Testis (tissue), 5 donors: ENCODE measurements at regions of chr15 and their contacts with region 1.

Region 1: GRCh38 chr15:63322541-63322940 is 45.1 kb downstream of the APH1B start:
- DNase-seq: peak; percentile 45
- H3K4me3 ChIP-seq: no peak overlapping the region
- H3K27ac ChIP-seq: no peak overlapping the region
- H3K4me1 ChIP-seq: no peaks in the 10 kb centered on the region
- H3K27me3 ChIP-seq: no peaks in the 10 kb centered on the region
- CTCF ChIP-seq: no peak
- POLR2A ChIP-seq: no peak

Region 2: GRCh38 chr15:63381301-63382204 is 59.0 kb after region 1 on chr15 and contains the start of gene CA12:
- intact Hi-C with region 1: loop called (anchors 10 kb)
- DNase-seq: peak; percentile 33
- H3K4me3 ChIP-seq: peak within 1 kb of the TSS; percentile 34 to 43
- H3K27ac ChIP-seq: no peak within 1 kb of the TSS
- H3K4me1 ChIP-seq: peaks cover 8% of the 10 kb centered on the region
- H3K27me3 ChIP-seq: no peaks in the 10 kb centered on the region
- CTCF ChIP-seq: no peak
- POLR2A ChIP-seq: no peak
- total RNA-seq, gene CA12: 0.55 to 0.68 TPM

Region 3: DNA sequence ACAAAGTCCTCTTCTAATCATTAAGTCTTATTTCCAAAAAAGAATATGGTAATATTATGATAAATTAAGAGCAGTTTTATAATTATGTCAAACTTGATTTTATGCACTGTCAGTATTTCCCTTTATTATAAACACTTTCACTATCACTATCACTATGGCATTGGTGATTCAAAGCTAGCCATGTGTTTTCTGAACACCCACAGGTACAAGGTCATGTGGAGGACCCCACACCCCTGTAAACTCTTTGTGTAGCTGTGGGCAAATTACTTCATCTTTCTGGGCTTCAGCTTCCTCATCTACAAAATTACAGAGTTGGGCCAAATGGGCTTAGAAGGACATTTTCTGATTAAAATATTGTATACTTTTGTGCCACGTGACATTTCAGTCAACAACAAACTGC is 316.3 kb after region 1 on chr15:
- intact Hi-C with region 1: no loop called
- DNase-seq: no peak
- H3K4me3 ChIP-seq: no peak overlapping the region
- H3K27ac ChIP-seq: no peak overlapping the region
- H3K4me1 ChIP-seq: no peaks in the 10 kb centered on the region
- H3K27me3 ChIP-seq: no peaks in the 10 kb centered on the region
- CTCF ChIP-seq: no peak
- POLR2A ChIP-seq: no peak